Prostate gland (tissue), 2 donors: ENCODE measurements at regions of chr3 and their contacts with region 1.

Region 1: GRCh38 chr3:132034486-132035464 is at the start of gene CPNE4:
- DNase-seq: peak; percentile 82
- H3K4me3 ChIP-seq: peak within 1 kb of the TSS; percentile 29 to 49
- H3K27ac ChIP-seq: peak within 1 kb of the TSS; percentile 68 to 82
- H3K4me1 ChIP-seq: no peaks in the 10 kb centered on the region
- H3K27me3 ChIP-seq: no peaks in the 10 kb centered on the region
- CTCF ChIP-seq: peak; percentile 52 to 91 (median 80)
- POLR2A ChIP-seq: no peak
- total RNA-seq, gene CPNE4: 39.9 to 68.2 TPM

Region 2: GRCh38 chr3:131026321-131027178 is 1008.2 kb before region 1 on chr3 and contains the starts of genes ASTE1 and NEK11:
- intact Hi-C with region 1: loop called (anchors 10 kb)
- DNase-seq: peak; percentile 88
- H3K4me3 ChIP-seq: peak within 1 kb of the TSS; percentile 48 to 61
- H3K27ac ChIP-seq: peak within 1 kb of the TSS; percentile 82 to 86
- H3K4me1 ChIP-seq: no peaks in the 10 kb centered on the region
- H3K27me3 ChIP-seq: no peaks in the 10 kb centered on the region
- CTCF ChIP-seq: peak in 1 of 4 experiments; percentile 5
- POLR2A ChIP-seq: peak; percentile 43
- total RNA-seq, gene ASTE1: 6.1 to 7.7 TPM
- total RNA-seq, gene NEK11: 7.4 to 14.0 TPM

Region 3: GRCh38 chr3:131917006-131917405 is 117.8 kb before region 1 on chr3:
- intact Hi-C with region 1: no loop called
- DNase-seq: no peak
- H3K4me3 ChIP-seq: no peak overlapping the region
- H3K27ac ChIP-seq: no peak overlapping the region
- H3K4me1 ChIP-seq: no peaks in the 10 kb centered on the region
- H3K27me3 ChIP-seq: no peaks in the 10 kb centered on the region
- CTCF ChIP-seq: no peak
- POLR2A ChIP-seq: no peak

Region 4: GRCh38 chr3:132180337-132180791 is 145.6 kb after region 1 on chr3:
- intact Hi-C with region 1: loop called (anchors 5 kb)
- DNase-seq: peak; percentile 74
- H3K4me3 ChIP-seq: no peak overlapping the region
- H3K27ac ChIP-seq: peak overlapping the region in 1 of 2 donors; percentile 52
- H3K4me1 ChIP-seq: peaks cover 6% of the 10 kb centered on the region
- H3K27me3 ChIP-seq: no peaks in the 10 kb centered on the region
- CTCF ChIP-seq: peak in 3 of 4 experiments; percentile 55 to 71 (median 62)
- POLR2A ChIP-seq: no peak

Region 5: GRCh38 chr3:132343018-132343612 is 308.3 kb after region 1 on chr3:
- intact Hi-C with region 1: loop called (anchors 10 kb)
- DNase-seq: peak; percentile 52
- H3K4me3 ChIP-seq: no peak overlapping the region
- H3K27ac ChIP-seq: peak overlapping the region; percentile 56 to 74
- H3K4me1 ChIP-seq: no peaks in the 10 kb centered on the region
- H3K27me3 ChIP-seq: no peaks in the 10 kb centered on the region
- CTCF ChIP-seq: peak; percentile 30 to 88 (median 78)
- POLR2A ChIP-seq: no peak